Activated CD8-positive, alpha-beta T cell treated with anti-CD3 and anti-CD28 coated beads, Interleukin-2, amount 10 ng/mL, durations not matched to agents 7 days and 5 days (primary cell): ENCODE measurements at regions of chr12 and their contacts with region 1.

Region 1: DNA sequence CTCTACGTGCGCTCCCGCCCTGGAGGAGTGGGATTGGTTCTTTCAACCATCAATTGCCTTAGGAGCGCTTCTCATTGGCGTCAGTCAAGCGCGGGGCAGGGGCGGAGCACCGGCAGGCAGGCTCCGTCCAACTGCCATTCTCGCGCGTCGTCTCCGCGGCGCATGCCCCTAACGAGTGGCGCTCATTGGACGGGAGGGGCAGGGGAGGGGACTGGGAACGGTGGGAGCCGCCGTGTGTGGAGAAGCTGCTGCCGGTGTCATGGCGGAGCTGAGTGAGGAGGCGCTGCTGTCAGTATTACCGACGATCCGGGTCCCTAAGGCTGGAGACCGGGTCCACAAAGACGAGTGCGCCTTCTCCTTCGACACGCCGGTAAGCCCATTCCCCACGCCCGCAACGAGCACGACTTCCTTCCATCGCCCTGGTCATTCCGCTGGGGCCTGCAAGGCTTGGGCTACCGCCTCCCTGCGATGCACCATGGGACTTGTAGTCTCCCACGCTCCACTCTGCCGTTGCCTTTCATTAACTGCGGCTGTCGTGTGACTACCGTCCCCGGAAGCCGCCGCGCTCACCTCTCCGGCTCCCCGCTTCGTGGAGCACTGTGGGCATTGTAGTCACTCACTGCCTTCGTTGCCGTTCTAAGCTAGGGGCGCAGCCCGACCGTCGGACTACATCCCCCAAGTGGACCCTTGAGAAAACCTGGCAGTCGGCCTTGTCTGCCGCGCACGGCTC is at the start of gene USP5:
- DNase-seq: peak; percentile 99
- ATAC-seq: peak; percentile 83
- H3K4me3 Mint-ChIP-seq: peak within 1 kb of the TSS; percentile 90
- H3K27ac Mint-ChIP-seq: peak within 1 kb of the TSS; percentile 98
- H3K4me1 Mint-ChIP-seq: peaks cover 44% of the 10 kb centered on the region
- H3K27me3 Mint-ChIP-seq: no peaks in the 10 kb centered on the region
- total RNA-seq, gene USP5: 105 to 108 TPM

Region 2: DNA sequence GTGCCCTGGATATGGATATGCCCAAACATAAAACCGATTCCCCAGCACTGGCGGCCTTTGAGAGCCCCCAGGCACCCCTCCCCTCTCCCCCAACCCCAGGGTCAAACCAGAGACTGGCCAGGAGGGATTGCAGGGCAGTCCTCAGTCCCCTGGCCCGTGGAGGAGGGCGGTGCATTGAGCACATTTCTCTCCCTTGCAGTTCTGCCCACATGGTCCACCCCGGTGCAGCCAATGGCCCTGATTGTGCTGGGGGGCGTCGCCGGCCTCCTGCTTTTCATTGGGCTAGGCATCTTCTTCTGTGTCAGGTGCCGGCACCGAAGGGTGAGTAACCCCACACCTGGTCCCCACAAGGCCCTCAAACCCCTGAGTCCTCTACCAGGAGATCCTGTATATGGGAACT is 33.9 kb before region 1 on chr12:
- CTCF ChIA-PET with region 1: no interaction called
- POLR2A ChIA-PET with region 1: no interaction called
- DNase-seq: no peak
- ATAC-seq: no peak
- H3K4me3 Mint-ChIP-seq: no peak overlapping the region
- H3K27ac Mint-ChIP-seq: no peak overlapping the region
- H3K4me1 Mint-ChIP-seq: peaks cover 15% of the 10 kb centered on the region
- H3K27me3 Mint-ChIP-seq: peaks cover 33% of the 10 kb centered on the region

Region 3: DNA sequence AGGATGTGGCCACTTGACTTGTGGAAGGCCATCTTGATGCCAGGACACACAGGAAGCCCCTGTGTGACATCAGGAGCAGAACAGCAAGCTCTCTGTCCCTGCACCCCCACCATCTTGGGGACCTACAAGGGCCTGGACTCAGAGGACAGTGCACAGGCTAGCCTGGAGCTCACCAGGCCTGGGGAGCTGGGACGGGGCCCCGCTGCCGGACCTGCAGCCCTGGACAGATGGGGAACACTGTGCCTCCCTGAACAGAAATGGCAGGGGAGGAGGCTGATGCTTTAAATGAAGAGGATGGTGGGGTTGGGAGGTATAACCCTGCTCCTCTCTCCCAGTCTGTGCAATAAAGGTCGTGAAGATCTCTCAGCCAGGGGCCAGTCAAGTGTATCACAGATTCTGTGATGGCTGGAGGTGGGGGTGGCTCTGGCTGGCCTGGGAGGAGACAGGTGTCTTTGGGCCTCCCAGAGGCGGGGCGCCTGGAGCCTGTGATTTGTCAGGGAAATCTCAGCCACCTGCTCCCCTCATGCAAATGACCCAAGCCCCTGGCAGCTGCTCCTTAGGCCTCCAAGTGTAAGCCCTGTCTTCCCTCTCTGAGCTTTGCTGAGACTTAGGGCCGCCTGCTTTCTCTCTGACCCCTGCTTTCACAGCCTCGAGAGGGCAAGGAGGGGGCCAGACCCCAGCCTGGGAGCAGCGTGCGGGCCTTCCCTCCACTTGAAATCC is 12.4 kb before region 1 on chr12:
- CTCF ChIA-PET with region 1: interaction called, 130 read pairs
- POLR2A ChIA-PET with region 1: interaction called, 15 read pairs
- DNase-seq: no peak
- ATAC-seq: no peak
- H3K4me3 Mint-ChIP-seq: no peak overlapping the region
- H3K27ac Mint-ChIP-seq: no peak overlapping the region
- H3K4me1 Mint-ChIP-seq: peaks cover 3% of the 10 kb centered on the region
- H3K27me3 Mint-ChIP-seq: peaks cover 3% of the 10 kb centered on the region